ENCODE measurements at regions of chr2 and their contacts with region 1.

Region 1: GRCh38 chr2:85066874-85067351 is 66.3 kb upstream of the TCF7L1 start:
- DNase-seq: peak; percentile 84 to 86
- H3K4me3 ChIP-seq: no peak overlapping the region
- H3K27ac ChIP-seq: no peak overlapping the region
- H3K4me1 ChIP-seq: peaks cover 0 to 4% of the 10 kb centered on the region in 2 donors
- H3K27me3 ChIP-seq: no peaks in the 10 kb centered on the region
- CTCF ChIP-seq: peak; percentile 66 to 94 (median 88)
- POLR2A ChIP-seq: no peak

Region 2: GRCh38 chr2:84713441-84713840 is 353.5 kb before region 1 on chr2:
- intact Hi-C with region 1: no loop called
- DNase-seq: no peak
- H3K4me3 ChIP-seq: no peak overlapping the region
- H3K27ac ChIP-seq: no peak overlapping the region
- H3K4me1 ChIP-seq: no peaks in the 10 kb centered on the region
- H3K27me3 ChIP-seq: no peaks in the 10 kb centered on the region
- CTCF ChIP-seq: no peak
- POLR2A ChIP-seq: no peak

Region 3: DNA sequence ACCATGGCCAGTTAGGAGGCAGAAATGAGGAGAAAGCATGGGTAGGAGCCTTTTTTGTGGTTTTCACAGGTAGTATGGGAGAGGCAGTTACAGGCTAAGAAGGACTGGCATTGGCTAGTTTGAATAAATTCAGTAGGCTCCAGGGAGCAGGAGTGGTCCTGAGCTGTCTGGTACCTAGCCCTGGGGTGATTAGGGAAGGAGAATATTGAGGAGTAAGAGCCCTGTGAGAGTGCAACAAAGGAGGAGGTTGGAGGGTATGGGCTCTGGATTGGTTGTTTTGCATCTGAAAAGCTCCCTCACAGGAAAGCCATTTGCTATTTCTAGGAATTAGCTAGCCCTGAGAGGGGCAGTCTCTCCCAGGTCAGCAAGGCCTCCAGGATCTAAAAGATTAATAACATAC is 53.0 kb after region 1 on chr2:
- intact Hi-C with region 1: loop called (anchors 10 kb)
- DNase-seq: no peak
- H3K4me3 ChIP-seq: no peak overlapping the region
- H3K27ac ChIP-seq: no peak overlapping the region
- H3K4me1 ChIP-seq: no peaks in the 10 kb centered on the region
- H3K27me3 ChIP-seq: no peaks in the 10 kb centered on the region
- CTCF ChIP-seq: no peak
- POLR2A ChIP-seq: no peak

Region 4: DNA sequence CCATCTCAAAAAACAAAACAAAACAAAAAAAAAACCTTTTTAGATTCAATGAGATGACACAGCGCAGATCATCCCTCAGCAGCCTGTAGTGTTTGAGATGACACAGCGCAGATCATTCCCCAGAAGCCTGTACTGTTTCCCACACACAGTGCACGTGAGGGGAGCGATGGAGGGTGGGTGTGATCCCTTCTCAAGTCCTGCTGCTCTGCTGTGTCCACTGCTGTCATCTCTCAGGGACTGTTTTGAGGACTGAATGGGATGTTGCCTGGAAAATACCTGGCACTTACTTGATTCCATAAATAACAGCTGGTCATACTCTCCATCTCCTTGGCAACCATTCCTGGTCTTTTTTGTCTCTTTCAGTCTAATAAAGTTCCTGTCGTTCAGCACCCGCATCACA is 235.2 kb after region 1 on chr2:
- intact Hi-C with region 1: loop called (anchors 5 kb)
- DNase-seq: no peak
- H3K4me3 ChIP-seq: no peak overlapping the region
- H3K27ac ChIP-seq: no peak overlapping the region
- H3K4me1 ChIP-seq: no peaks in the 10 kb centered on the region
- H3K27me3 ChIP-seq: no peaks in the 10 kb centered on the region
- CTCF ChIP-seq: no peak
- POLR2A ChIP-seq: no peak

Measured in thyroid gland (tissue), 4 donors.